Ascending aorta (tissue), 2 donors: ENCODE measurements at regions of chr10 and their contacts with region 1.

Region 1: GRCh38 chr10:46539596-46540411 is 16.7 kb downstream of the GPRIN2 start:
- DNase-seq: peak; percentile 8 to 59
- H3K4me3 ChIP-seq: peak overlapping the region in 1 of 2 donors; percentile 40
- H3K27ac ChIP-seq: peak overlapping the region; percentile 67 to 68
- H3K4me1 ChIP-seq: peaks cover 4 to 14% of the 10 kb centered on the region in 2 donors
- H3K27me3 ChIP-seq: no peaks in the 10 kb centered on the region
- CTCF ChIP-seq: no peak

Region 2: GRCh38 chr10:46523881-46524470 is 15.8 kb before region 1 on chr10:
- intact Hi-C with region 1: loop called (anchors 1 kb)
- DNase-seq: peak; percentile 10 to 71
- H3K4me3 ChIP-seq: no peak overlapping the region
- H3K27ac ChIP-seq: peak overlapping the region; percentile 11 to 22
- H3K4me1 ChIP-seq: peaks cover 9 to 18% of the 10 kb centered on the region in 2 donors
- H3K27me3 ChIP-seq: no peaks in the 10 kb centered on the region
- CTCF ChIP-seq: no peak